ENCODE measurements at regions of chr19 and their contacts with region 1.

Region 1: DNA sequence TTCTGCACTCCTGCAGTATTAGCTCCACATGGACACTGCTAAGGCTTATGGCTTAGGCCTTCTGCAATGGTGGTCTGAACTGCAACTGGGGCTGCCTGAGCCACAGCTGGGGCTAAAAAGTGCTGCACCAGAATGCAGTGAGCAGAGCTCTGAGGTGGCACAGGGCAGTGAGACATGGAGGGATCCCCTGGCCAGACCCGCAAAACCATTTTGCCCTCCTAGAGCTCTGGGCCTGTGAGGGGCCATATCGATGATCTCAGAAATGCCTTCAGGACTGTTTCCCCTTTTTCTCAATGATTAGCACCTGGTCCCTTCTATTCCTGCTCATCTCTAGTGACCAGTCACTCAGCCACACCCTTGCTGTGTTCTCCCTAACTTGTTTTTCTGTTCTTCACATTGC is 397.7 kb downstream of the UQCRFS1 start:
- DNase-seq: no peak
- ATAC-seq: no peak
- H3K4me3 ChIP-seq: no peak overlapping the region
- H3K27ac ChIP-seq: no peak overlapping the region
- H3K4me1 ChIP-seq: no peaks in the 10 kb centered on the region
- CTCF ChIP-seq: no peak
- EP300 ChIP-seq: no peak
- POLR2A ChIP-seq: no peak
- RAD21 ChIP-seq: no peak

Region 2: DNA sequence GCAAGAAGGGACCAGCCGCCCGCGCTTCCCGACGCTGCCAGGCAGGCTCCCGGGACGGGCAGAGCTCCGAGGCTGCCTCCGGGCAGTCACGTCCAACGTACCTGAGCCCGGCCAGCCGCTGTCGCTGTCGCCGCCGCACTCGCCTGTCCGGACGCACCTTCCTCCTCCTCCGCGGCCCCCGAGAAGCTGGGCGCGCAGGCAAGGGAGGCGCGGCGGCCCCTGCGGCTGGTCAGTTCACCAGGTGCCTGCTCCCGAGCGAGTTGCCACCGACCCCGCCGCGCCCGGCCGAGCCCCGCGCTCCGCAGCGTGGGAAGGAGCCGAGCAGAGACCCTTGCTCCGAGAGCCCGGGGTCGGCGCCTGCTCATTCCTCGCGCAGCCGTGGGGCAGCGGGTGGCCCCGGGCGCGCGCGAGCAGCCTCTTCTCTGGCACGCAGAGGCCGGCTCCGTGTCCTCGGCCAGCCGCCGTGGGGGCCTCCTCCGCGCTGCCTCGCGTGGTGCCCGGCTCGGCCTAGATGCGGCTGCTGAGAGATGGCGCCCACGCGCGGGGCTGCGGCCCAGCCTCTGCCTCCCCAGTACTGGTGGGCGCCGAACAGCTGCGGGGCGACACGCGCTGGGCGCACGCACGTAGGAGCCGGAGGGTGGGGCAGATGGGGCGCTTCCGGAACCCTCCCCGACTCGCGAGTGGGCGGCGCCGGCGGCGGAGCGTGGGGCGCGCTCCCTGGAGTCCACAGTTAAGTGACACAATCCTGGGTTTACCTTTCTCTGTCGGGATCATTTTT is 21.7 kb before region 1 on chr19:
- CTCF ChIA-PET with region 1: no interaction called
- POLR2A ChIA-PET with region 1: no interaction called
- DNase-seq: no peak
- ATAC-seq: no peak
- H3K4me3 ChIP-seq: no peak overlapping the region
- H3K27ac ChIP-seq: no peak overlapping the region
- H3K4me1 ChIP-seq: no peaks in the 10 kb centered on the region
- CTCF ChIP-seq: no peak
- EP300 ChIP-seq: no peak
- POLR2A ChIP-seq: no peak
- RAD21 ChIP-seq: no peak

Region 3: DNA sequence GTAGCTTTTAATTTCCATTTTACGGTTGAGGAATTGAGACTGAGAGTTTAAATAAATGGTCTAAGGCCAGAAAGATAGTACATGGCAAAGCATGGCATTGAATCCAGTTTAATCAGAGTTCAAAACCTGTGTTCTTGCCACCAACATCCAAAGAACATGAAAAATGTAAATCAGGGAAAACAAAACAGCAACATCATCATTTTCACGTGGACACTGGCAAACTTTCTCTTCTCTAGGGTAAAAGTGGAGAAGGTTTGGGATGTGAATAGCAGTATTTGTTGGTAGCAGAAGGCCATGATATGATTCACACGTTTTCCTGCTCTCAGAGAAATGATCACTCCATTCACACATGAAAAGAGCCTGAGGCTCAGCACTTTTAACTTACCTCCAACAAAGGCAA is 40.0 kb after region 1 on chr19:
- CTCF ChIA-PET with region 1: no interaction called
- POLR2A ChIA-PET with region 1: interaction called, 10 read pairs
- DNase-seq: no peak
- ATAC-seq: no peak
- H3K4me3 ChIP-seq: no peak overlapping the region
- H3K27ac ChIP-seq: no peak overlapping the region
- H3K4me1 ChIP-seq: no peaks in the 10 kb centered on the region
- CTCF ChIP-seq: no peak
- EP300 ChIP-seq: no peak
- POLR2A ChIP-seq: no peak
- RAD21 ChIP-seq: no peak

Region 4: GRCh38 chr19:28878862-28879566 is 63.8 kb after region 1 on chr19:
- CTCF ChIA-PET with region 1: no interaction called
- POLR2A ChIA-PET with region 1: no interaction called
- DNase-seq: peak; percentile 79 to 83
- ATAC-seq: peak; percentile 36 to 90; a peak in 4 of 6 replicates
- H3K4me3 ChIP-seq: no peak overlapping the region
- H3K27ac ChIP-seq: no peak overlapping the region
- H3K4me1 ChIP-seq: no peaks in the 10 kb centered on the region
- CTCF ChIP-seq: peak; percentile 86
- EP300 ChIP-seq: no peak
- POLR2A ChIP-seq: no peak
- RAD21 ChIP-seq: peak; percentile 89 to 94

Measured in A549 (cell line).